Posterior vena cava (tissue), 2 donors: ENCODE measurements at regions of chr6 and their contacts with region 1.

Region 1: DNA sequence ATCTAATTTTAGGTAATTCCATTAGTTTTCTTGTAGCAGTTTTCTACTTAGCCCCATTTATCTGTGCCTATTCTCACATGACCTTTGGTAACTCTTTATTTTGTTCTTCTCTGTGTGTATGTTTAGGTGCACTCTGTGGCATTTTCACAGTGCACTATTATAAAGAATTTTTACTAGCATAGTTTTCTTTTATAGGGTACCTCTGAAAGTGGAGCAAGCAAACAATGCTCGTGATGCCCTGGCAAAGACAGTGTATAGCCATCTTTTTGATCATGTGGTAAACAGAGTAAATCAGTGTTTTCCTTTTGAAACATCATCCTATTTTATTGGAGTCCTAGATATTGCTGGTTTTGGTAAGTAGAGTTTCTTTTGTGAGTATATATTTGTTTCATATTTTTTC is 107.9 kb downstream of the MYO6 start:
- DNase-seq: no peak

Region 2: DNA sequence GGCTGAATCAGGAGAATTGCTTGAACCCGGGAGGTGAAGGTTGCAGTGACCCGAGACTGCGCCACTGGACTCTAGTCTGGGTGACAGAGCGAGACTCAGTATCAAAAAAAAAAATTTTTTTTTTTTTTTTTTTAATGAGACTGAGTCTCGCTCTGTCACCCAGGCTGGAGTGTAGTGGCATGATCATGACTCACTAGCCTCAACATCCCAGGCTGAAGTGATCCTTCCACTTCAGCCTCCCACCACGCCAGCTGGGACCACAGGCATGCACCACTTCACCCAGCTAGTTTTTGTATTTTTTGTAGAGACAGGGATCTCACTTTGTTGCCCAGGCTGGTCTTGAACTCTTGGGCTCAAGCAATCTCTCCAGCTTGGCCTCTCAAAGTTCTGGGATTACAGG is 54.5 kb before region 1 on chr6:
- intact Hi-C with region 1: loop called in 1 of 2 experiments (anchors 2 kb)
- DNase-seq: no peak